ENCODE measurements at regions of chr9 and their contacts with region 1.

Region 1: DNA sequence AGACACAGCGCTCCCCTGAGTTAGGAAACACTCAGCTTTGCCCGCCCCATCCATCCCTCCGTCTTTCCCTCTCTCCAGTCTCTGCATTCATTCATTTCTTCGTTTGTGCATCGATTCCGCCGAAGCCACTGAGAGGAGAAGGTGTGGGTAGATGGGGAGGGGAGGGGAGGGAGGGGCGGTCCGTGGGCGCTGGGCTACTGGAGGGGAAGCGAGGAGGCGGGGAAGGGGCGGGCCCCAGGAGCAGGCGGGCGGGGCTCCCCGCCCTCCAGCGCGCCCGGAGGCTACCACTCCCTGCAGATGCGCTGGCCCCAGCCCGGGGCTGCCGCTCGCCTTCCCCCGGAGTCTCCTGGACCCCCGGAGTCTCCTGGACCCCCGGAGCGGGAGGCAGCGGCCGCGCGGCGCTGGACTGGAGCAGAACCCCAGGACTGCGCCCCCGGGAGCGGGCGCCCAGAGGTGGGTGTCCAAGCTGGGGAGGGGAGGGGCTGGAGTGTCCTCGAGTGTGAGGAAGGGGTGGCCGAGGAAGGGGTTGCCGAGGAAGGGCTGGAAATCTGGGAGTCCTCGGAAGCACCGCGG is 159.5 kb downstream of the C9orf152 start:
- DNase-seq: peak; percentile 85 to 90 (median 90)
- ATAC-seq: peak; percentile 88 to 96 (median 95)
- H3K4me3 ChIP-seq: peak overlapping the region; percentile 72 to 91 (median 86)
- H3K27ac ChIP-seq: peak overlapping the region; percentile 35 to 91 (median 83)
- H3K4me1 ChIP-seq: peaks cover 3 to 54% (median 30%) of the 10 kb centered on the region in 12 donors
- H3K27me3 ChIP-seq: no peaks in the 10 kb centered on the region
- CTCF ChIP-seq: no peak
- POLR2A ChIP-seq: peak; percentile 68 to 90

Region 2: GRCh38 chr9:108994695-108995094 is 1053.8 kb before region 1 on chr9:
- intact Hi-C with region 1: no loop called
- DNase-seq: peak; percentile 69 to 81 (median 78)
- ATAC-seq: peak; percentile 82 to 97 (median 94)
- H3K4me3 ChIP-seq: no peak overlapping the region
- H3K27ac ChIP-seq: peak overlapping the region; percentile 40 to 84 (median 62)
- H3K4me1 ChIP-seq: peaks cover 0 to 78% (median 34%) of the 10 kb centered on the region in 12 donors
- H3K27me3 ChIP-seq: no peaks in the 10 kb centered on the region
- CTCF ChIP-seq: no peak
- POLR2A ChIP-seq: no peak

Region 3: DNA sequence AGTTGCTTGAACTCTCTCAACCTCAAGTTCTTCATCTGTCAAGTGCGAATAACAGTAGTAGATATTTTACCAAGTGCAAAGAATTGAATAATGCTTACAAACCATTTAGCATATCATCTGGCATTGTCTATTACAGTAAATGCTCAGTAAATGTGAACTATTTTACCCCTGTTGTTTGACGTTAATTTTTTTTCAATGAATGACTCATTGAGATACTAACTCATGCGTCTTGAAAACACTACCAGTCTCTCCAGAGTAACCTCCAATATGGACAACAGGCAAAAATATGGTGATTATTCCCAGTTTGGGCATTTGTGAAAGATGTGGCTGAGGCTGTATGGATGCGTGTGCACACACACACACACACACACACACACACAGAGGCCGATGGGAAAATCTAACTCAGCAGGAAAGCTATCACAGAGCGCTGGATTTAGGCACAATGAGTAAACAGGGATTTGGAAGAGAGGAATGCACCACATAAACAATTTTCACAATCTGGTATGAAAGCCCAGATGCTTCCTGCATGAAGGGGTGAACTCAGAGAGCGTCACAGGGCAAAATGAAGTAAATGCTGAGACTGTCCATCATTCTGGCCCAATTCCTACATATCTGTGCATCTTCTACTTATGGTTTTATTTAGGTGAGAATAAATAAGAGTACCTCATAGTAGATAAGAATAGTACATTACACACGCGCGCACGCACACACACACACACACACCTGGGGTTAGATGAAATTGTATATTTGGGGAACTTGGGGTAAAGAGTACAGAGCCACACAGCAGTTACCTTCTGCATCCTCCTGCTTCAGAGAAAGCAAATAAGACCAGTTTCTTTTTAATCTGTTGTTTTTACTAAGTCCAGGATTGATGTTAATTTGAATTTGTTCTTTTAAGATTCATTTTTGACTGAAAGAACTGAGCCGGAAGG is 139.8 kb before region 1 on chr9:
- intact Hi-C with region 1: loop called in 2 of 10 experiments (anchors 2 to 5 kb)
- DNase-seq: no peak
- ATAC-seq: no peak
- H3K4me3 ChIP-seq: no peak overlapping the region
- H3K27ac ChIP-seq: peak overlapping the region; percentile 33 to 83 (median 72)
- H3K4me1 ChIP-seq: peaks cover 11 to 95% (median 61%) of the 10 kb centered on the region in 12 donors
- H3K27me3 ChIP-seq: no peaks in the 10 kb centered on the region
- CTCF ChIP-seq: no peak
- POLR2A ChIP-seq: no peak

Region 4: GRCh38 chr9:109969011-109969410 is 79.5 kb before region 1 on chr9:
- intact Hi-C with region 1: loop called in 4 of 10 experiments (anchors 5 to 10 kb)
- DNase-seq: peak in 3 of 5 donors; percentile 37 to 44 (median 43)
- ATAC-seq: peak; percentile 32 to 79 (median 60)
- H3K4me3 ChIP-seq: no peak overlapping the region
- H3K27ac ChIP-seq: peak overlapping the region in 11 of 12 donors; percentile 13 to 88 (median 66)
- H3K4me1 ChIP-seq: peaks cover 0 to 67% (median 39%) of the 10 kb centered on the region in 12 donors
- H3K27me3 ChIP-seq: no peaks in the 10 kb centered on the region
- CTCF ChIP-seq: peak in 8 of 12 donors; percentile 8 to 52 (median 26)
- POLR2A ChIP-seq: no peak

Region 5: DNA sequence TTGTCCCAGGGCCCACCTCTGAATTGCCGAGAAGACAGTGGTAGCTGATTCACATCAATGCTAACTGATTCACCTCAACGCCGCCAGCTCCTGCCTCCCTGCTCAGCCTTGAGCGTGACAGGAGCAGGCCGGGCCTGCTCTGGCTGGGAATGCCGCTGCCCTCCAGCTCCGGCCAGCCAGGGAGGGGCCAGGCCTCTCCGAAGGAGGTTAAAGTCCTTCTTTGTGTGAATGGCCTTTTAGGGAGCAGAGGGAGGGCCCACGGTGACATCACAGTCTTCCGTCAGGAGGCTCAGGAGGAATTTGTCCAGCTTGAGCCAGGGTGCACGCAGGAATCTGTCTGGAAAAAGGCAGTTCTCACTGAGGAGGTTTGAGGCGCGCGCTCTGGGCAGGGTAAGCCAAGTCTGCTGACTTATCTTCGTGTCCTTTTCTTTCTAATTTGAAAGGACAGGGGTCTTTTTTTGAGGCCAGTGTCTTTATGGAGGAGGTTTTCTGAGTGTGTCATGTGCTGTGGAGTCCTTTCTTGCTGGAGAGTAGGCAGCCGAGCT is 76.8 kb after region 1 on chr9:
- intact Hi-C with region 1: loop called in 1 of 10 experiments (anchors 5 kb)
- DNase-seq: peak; percentile 88 to 94 (median 90)
- ATAC-seq: peak; percentile 85 to 90 (median 88)
- H3K4me3 ChIP-seq: peak overlapping the region in 11 of 12 donors; percentile 21 to 56 (median 46)
- H3K27ac ChIP-seq: peak overlapping the region; percentile 74 to 93 (median 90)
- H3K4me1 ChIP-seq: peaks cover 14 to 90% (median 74%) of the 10 kb centered on the region in 12 donors
- H3K27me3 ChIP-seq: no peaks in the 10 kb centered on the region
- CTCF ChIP-seq: no peak
- POLR2A ChIP-seq: peak in 1 of 2 donors; percentile 86